ENCODE measurements at regions of chr19 and their contacts with region 1.

Region 1: GRCh38 chr19:33186431-33187182 is 7.5 kb upstream of the LRP3 start:
- DNase-seq: no peak
- ATAC-seq: no peak
- H3K4me3 Mint-ChIP-seq: no peak overlapping the region
- H3K27ac Mint-ChIP-seq: no peak overlapping the region
- H3K4me1 Mint-ChIP-seq: peaks cover 3% of the 10 kb centered on the region
- H3K27me3 Mint-ChIP-seq: peaks cover 12% of the 10 kb centered on the region

Region 2: GRCh38 chr19:33094436-33095067 is 92.1 kb before region 1 on chr19:
- CTCF ChIA-PET with region 1: no interaction called
- DNase-seq: no peak
- ATAC-seq: no peak
- H3K4me3 Mint-ChIP-seq: no peak overlapping the region
- H3K27ac Mint-ChIP-seq: no peak overlapping the region
- H3K4me1 Mint-ChIP-seq: peaks cover 3% of the 10 kb centered on the region
- H3K27me3 Mint-ChIP-seq: no peaks in the 10 kb centered on the region

Region 3: GRCh38 chr19:33125929-33126388 is 60.6 kb before region 1 on chr19:
- CTCF ChIA-PET with region 1: interaction called, 16 read pairs
- DNase-seq: peak; percentile 66
- ATAC-seq: peak; percentile 90
- H3K4me3 Mint-ChIP-seq: no peak overlapping the region
- H3K27ac Mint-ChIP-seq: no peak overlapping the region
- H3K4me1 Mint-ChIP-seq: peaks cover 4% of the 10 kb centered on the region
- H3K27me3 Mint-ChIP-seq: no peaks in the 10 kb centered on the region

Region 4: GRCh38 chr19:33132425-33132824 is 54.2 kb before region 1 on chr19:
- CTCF ChIA-PET with region 1: interaction called, 10 read pairs
- DNase-seq: no peak
- ATAC-seq: no peak
- H3K4me3 Mint-ChIP-seq: no peak overlapping the region
- H3K27ac Mint-ChIP-seq: no peak overlapping the region
- H3K4me1 Mint-ChIP-seq: peaks cover 6% of the 10 kb centered on the region
- H3K27me3 Mint-ChIP-seq: no peaks in the 10 kb centered on the region

Region 5: GRCh38 chr19:33156334-33156733 is 30.3 kb before region 1 on chr19:
- CTCF ChIA-PET with region 1: interaction called, 48 read pairs
- DNase-seq: no peak
- ATAC-seq: no peak
- H3K4me3 Mint-ChIP-seq: no peak overlapping the region
- H3K27ac Mint-ChIP-seq: no peak overlapping the region
- H3K4me1 Mint-ChIP-seq: peaks cover 34% of the 10 kb centered on the region
- H3K27me3 Mint-ChIP-seq: no peaks in the 10 kb centered on the region

Region 6: DNA sequence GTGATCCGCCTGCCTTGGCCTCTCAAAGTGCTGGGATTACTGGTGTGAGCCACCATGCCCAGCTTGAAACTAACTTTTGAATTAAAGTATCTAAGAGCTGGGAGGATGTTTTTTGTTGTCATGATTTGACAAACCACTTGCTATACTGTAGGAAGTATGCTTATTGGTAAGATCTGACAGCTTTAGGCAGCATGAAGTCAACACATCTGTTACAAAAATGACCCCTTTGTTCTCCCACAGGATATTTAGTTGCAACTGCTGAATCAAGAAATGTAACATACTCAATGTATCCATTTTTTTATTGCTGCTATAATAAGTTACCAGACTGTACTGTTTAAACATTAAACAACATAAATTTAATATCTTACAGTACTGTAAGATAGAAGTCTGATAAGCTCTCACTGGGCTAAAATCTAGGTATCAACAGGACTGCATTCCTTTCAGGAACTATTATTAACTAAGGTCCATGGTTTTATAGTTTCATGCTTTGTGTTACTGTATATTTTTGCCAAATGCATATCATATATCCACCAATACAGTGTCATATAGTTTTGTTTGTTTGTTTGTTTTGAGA is 15.3 kb before region 1 on chr19:
- CTCF ChIA-PET with region 1: interaction called, 16 read pairs
- DNase-seq: no peak
- ATAC-seq: no peak
- H3K4me3 Mint-ChIP-seq: no peak overlapping the region
- H3K27ac Mint-ChIP-seq: no peak overlapping the region
- H3K4me1 Mint-ChIP-seq: peaks cover 15% of the 10 kb centered on the region
- H3K27me3 Mint-ChIP-seq: peaks cover 3% of the 10 kb centered on the region

Region 7: GRCh38 chr19:33199441-33200265 is 13.0 kb after region 1 on chr19:
- CTCF ChIA-PET with region 1: interaction called, 13 read pairs
- DNase-seq: no peak
- ATAC-seq: no peak
- H3K4me3 Mint-ChIP-seq: no peak overlapping the region
- H3K27ac Mint-ChIP-seq: no peak overlapping the region
- H3K4me1 Mint-ChIP-seq: peaks cover 2% of the 10 kb centered on the region
- H3K27me3 Mint-ChIP-seq: peaks cover 13% of the 10 kb centered on the region